ENCODE measurements at regions of chr11 and their contacts with region 1.

Region 1: DNA sequence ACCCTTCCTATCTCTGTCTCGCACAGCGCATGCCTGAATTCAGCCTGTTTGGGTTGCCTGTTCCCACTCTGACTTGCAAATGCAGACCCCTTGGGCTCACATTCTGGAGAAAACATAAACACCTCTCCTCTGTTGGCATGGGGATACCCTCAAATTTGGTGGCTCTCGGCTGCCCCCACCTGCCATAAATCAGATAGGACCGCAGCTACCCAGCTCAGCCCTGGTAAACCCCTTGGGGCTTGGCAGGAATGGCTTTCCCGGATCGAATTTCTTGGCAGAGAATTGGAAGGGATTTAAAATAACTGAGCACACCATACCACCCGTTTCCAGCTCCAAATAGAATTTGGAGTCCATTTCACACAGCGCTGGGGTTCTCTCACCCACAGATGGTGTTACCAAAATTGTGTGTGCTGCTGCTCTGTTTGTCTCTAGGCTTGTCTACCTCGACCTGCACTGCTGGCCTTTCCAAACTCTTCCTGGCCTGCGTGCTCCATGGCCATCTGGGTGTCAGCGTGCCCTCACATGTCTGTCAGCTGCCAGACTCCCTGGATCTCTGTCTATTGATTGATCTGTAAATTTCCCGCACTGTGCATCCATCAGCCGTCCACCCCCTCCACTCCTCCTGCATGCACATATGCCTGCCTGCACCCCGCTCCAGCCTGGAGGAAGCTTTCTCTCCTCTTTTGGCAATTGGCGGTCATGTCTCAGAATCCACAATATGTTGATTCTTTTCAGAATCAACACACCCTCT is 134.0 kb downstream of the NTM start:
- DNase-seq: no peak
- ATAC-seq: peak; percentile 60 to 66
- H3K4me3 ChIP-seq: no peak overlapping the region
- H3K27ac ChIP-seq: no peak overlapping the region
- H3K4me1 ChIP-seq: no peaks in the 10 kb centered on the region
- H3K27me3 ChIP-seq: no peaks in the 10 kb centered on the region

Region 2: DNA sequence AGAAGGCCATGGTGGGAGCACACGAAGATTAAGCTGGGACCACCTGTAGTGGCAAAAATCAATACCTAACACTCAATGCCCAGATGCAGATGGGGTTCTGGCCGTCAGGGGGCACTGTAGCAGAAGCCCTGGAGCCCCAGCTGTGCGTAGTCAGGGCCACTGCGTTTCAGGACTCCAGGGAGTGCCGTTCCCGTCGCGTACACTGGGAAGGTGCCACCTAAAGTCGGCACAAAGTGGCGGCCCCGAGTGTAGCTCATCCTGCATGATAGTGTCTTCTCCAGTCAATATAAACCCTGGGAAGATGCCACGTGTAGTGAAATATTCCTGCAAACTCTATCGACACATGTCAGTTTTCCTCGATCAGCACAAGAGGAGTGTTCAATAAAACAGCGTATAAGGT is 257.7 kb before region 1 on chr11:
- intact Hi-C with region 1: loop called in 1 of 4 experiments (anchors 5 kb)
- DNase-seq: peak; percentile 18 to 65 (median 54)
- ATAC-seq: peak in 1 of 2 donors; percentile 63
- H3K4me3 ChIP-seq: no peak overlapping the region
- H3K27ac ChIP-seq: no peak overlapping the region
- H3K4me1 ChIP-seq: no peaks in the 10 kb centered on the region
- H3K27me3 ChIP-seq: no peaks in the 10 kb centered on the region

Region 3: DNA sequence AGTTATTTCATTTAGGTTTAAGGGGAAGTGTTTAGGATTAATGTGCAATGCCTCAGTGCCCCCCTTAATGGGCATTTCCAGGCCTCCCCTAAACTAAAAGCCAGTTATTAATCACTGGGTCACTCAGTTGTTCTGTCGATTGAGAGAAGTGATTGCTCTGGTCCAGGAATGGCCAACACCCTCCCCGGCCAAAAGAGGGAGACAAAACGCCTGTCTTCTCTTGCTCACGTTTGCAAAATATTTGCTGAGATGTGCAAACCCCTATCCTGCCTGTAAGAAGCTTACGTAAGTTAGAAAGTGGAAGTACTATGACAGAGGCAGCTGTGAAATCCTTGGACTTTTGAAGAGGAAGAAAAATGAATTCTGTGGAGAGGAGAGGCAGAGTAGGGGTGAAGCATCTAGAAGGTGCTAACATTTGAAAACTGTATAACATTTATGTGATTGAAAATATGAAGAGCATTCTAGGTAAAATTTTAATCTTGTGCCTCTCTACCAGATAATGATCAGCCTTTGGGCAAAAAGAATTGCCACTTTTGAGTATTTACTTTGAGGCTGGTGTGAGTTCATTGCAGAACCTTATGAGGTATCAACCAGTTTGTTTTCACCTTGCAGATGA is 96.2 kb before region 1 on chr11:
- intact Hi-C with region 1: loop called in 2 of 4 experiments (anchors 5 to 10 kb)
- DNase-seq: no peak
- ATAC-seq: peak; percentile 47 to 63
- H3K4me3 ChIP-seq: no peak overlapping the region
- H3K27ac ChIP-seq: no peak overlapping the region
- H3K4me1 ChIP-seq: no peaks in the 10 kb centered on the region
- H3K27me3 ChIP-seq: no peaks in the 10 kb centered on the region

Region 4: GRCh38 chr11:131418189-131418588 is 86.2 kb before region 1 on chr11:
- intact Hi-C with region 1: loop called in 1 of 4 experiments (anchors 10 kb)
- DNase-seq: no peak
- ATAC-seq: no peak
- H3K4me3 ChIP-seq: no peak overlapping the region
- H3K27ac ChIP-seq: no peak overlapping the region
- H3K4me1 ChIP-seq: no peaks in the 10 kb centered on the region
- H3K27me3 ChIP-seq: no peaks in the 10 kb centered on the region